HEK293 (cell line): ENCODE measurements at regions of chr6 and their contacts with region 1.

Region 1: GRCh38 chr6:137743503-137743902 is 123.6 kb upstream of the TNFAIP3 start:
- H3K4me3 ChIP-seq: no peak overlapping the region
- H3K27ac ChIP-seq: no peak overlapping the region
- H3K4me1 ChIP-seq: no peaks in the 10 kb centered on the region
- CTCF ChIP-seq: no peak

Region 2: GRCh38 chr6:137202078-137202477 is 541.4 kb before region 1 on chr6:
- CTCF ChIA-PET with region 1: no interaction called
- POLR2A ChIA-PET with region 1: interaction called, 10 read pairs
- H3K4me3 ChIP-seq: no peak overlapping the region
- H3K27ac ChIP-seq: no peak overlapping the region
- H3K4me1 ChIP-seq: no peaks in the 10 kb centered on the region
- CTCF ChIP-seq: no peak

Region 3: GRCh38 chr6:137560184-137560563 is 183.3 kb before region 1 on chr6:
- CTCF ChIA-PET with region 1: no interaction called
- POLR2A ChIA-PET with region 1: no interaction called
- H3K4me3 ChIP-seq: no peak overlapping the region
- H3K27ac ChIP-seq: no peak overlapping the region
- H3K4me1 ChIP-seq: no peaks in the 10 kb centered on the region
- CTCF ChIP-seq: no peak

Region 4: GRCh38 chr6:137776786-137777686 is 33.5 kb after region 1 on chr6:
- CTCF ChIA-PET with region 1: no interaction called
- POLR2A ChIA-PET with region 1: no interaction called
- H3K4me3 ChIP-seq: no peak overlapping the region
- H3K27ac ChIP-seq: no peak overlapping the region
- H3K4me1 ChIP-seq: no peaks in the 10 kb centered on the region
- CTCF ChIP-seq: no peak